ENCODE measurements at regions of chr18 and their contacts with region 1.

Region 1: DNA sequence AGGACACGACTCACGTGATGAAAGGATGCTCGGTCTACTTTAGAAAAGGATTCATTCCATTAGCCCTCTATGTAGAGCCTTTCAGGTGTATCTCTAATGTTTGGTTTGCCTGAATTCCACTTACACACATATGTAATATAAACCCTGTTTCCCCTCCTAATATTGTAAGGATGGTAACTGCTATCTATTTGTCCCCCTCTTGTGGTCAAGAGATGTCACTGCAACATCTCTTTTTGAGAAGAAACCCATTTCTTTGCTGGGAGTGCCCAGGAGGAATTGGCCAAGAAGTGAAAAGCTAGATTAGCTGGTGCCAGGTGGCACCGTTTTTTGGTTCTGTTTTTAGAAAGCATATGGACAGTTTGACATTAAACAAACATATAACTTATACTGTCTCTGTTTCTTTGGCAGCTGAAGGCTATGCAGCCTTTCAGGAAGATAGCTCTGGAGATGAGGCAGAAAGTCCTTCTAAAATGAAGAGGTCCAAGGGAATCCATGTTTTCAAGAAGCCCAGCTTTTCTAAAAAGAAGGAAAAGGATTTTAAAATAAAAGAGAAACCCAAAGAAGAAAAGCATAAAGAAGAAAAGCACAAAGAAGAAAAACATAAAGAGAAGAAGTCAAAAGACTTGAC is 41.2 kb downstream of the RALBP1 start:
- DNase-seq: peak in 2 of 5 donors; percentile 51 to 58
- H3K4me3 ChIP-seq: no peak overlapping the region
- H3K27ac ChIP-seq: no peak overlapping the region
- H3K4me1 ChIP-seq: no peaks in the 10 kb centered on the region
- H3K27me3 ChIP-seq: no peaks in the 10 kb centered on the region
- CTCF ChIP-seq: peak; percentile 66

Region 2: GRCh38 chr18:9153256-9153655 is 363.3 kb before region 1 on chr18:
- intact Hi-C with region 1: loop called (anchors 10 kb)
- DNase-seq: no peak
- H3K4me3 ChIP-seq: no peak overlapping the region
- H3K27ac ChIP-seq: no peak overlapping the region
- H3K4me1 ChIP-seq: peaks cover 0 to 3% (median 2%) of the 10 kb centered on the region in 3 donors
- H3K27me3 ChIP-seq: no peaks in the 10 kb centered on the region
- CTCF ChIP-seq: no peak

Measured in kidney (tissue), 22 donors.